Activated CD4-positive, alpha-beta T cell treated with anti-CD3 and anti-CD28 coated beads, Interleukin-2, amount 10 ng/mL, durations not matched to agents 24 days and 14 days (primary cell): ENCODE measurements at regions of chr1 and their contacts with region 1.

Region 1: GRCh38 chr1:28248283-28249012 is 10.9 kb upstream of the SESN2 start:
- DNase-seq: peak; percentile 94
- H3K4me3 Mint-ChIP-seq: peak overlapping the region; percentile 93
- H3K27ac Mint-ChIP-seq: peak overlapping the region; percentile 93
- H3K4me1 Mint-ChIP-seq: peaks cover 43% of the 10 kb centered on the region
- H3K27me3 Mint-ChIP-seq: no peaks in the 10 kb centered on the region

Region 2: DNA sequence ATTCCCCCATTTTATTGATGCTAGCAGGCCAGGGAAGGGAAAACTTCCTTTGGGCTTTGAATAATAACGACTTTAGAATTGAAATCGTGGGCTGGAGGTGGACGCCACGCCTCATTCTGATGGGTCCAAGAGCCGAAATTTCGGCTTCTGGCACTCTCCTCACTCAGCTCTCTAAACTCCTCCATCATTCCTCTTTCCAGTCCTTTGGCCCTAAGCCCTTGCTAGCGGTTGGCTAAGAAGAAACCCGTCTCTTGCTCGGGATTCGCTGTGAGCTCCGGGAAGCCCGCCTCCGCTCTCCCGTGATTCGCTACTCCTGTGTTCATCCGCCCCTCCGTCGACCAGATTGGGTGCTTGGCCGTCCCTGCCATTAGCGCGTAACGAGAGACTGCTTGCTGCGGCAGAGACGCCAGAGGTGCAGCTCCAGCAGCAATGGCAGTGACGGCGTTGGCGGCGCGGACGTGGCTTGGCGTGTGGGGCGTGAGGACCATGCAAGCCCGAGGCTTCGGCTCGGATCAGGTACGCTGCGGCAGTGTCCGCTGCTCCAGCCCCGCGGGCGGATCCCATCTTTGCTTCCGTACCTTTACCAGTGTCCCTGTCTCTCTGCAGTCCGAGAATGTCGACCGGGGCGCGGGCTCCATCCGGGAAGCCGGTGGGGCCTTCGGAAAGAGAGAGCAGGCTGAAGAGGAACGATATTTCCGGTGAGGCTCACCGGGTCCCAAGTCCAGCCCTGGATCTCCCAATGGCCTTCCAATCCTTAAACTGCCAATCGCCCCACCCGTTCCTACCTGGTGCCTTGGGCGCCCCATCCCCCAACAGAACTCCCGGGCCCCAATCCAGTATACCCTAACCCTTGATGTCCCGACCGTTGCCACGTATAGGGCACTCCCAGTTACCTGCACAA is 12.4 kb before region 1 on chr1 and contains the start of gene ATP5IF1:
- intact Hi-C with region 1: loop called (anchors 1 kb)
- DNase-seq: peak; percentile 98
- H3K4me3 Mint-ChIP-seq: no peak within 1 kb of the TSS
- H3K27ac Mint-ChIP-seq: no peak within 1 kb of the TSS
- H3K4me1 Mint-ChIP-seq: peaks cover 11% of the 10 kb centered on the region
- H3K27me3 Mint-ChIP-seq: no peaks in the 10 kb centered on the region
- total RNA-seq, gene ATP5IF1: 139 and 142 TPM in 2 replicates

Region 3: DNA sequence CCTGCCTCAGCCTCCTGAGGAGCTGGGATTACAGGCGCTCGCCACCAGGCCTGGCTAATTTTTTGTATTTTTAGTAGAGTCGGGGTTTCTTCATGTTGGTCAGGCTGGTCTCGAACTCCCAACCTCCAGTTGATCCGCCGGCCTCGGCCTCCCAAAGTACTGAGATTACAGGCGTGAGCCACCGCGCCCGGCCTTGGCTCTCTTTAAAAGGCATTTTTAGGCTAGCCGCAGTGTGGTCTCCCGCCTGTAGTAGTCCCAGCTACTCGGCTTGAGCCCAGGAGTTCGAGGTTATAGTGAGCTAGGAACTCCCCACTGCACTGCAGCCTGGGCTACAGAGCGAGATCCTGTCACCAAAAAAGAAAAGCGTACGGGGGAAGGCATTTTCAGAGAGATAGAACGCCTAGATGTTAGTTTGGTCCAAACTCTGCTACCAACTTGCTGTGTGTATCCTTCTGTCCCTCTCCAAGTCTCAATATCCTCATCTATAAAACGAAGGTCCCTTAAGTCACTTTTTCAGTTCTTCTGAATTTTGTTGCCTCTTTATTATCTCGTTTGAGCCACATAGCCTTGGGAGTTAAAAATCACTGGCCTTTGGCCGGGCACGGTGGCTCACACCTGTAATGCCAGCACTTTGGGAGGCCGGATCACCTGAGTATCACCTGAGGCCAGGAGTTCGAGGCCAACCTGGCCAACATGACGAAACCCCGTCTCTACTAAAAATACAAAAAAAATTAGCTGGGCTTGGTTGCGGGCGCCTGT is 81.1 kb after region 1 on chr1:
- intact Hi-C with region 1: loop called (anchors 1 kb)
- DNase-seq: no peak
- H3K4me3 Mint-ChIP-seq: peak overlapping the region; percentile 96
- H3K27ac Mint-ChIP-seq: peak overlapping the region; percentile 98
- H3K4me1 Mint-ChIP-seq: peaks cover 33% of the 10 kb centered on the region
- H3K27me3 Mint-ChIP-seq: peaks cover 2% of the 10 kb centered on the region

Region 4: GRCh38 chr1:28449904-28450303 is 201.5 kb after region 1 on chr1:
- intact Hi-C with region 1: loop called (anchors 1 kb)
- DNase-seq: peak; percentile 87
- H3K4me3 Mint-ChIP-seq: peak overlapping the region; percentile 49
- H3K27ac Mint-ChIP-seq: peak overlapping the region; percentile 85
- H3K4me1 Mint-ChIP-seq: peaks cover 26% of the 10 kb centered on the region
- H3K27me3 Mint-ChIP-seq: no peaks in the 10 kb centered on the region

Region 5: GRCh38 chr1:28581536-28582247 is 333.2 kb after region 1 on chr1:
- intact Hi-C with region 1: loop called (anchors 5 kb)
- DNase-seq: peak; percentile 98
- H3K4me3 Mint-ChIP-seq: peak overlapping the region; percentile 94
- H3K27ac Mint-ChIP-seq: peak overlapping the region; percentile 97
- H3K4me1 Mint-ChIP-seq: peaks cover 29% of the 10 kb centered on the region
- H3K27me3 Mint-ChIP-seq: no peaks in the 10 kb centered on the region